Adrenal gland (tissue), 19 donors: ENCODE measurements at regions of chr15 and their contacts with region 1.

Region 1: DNA sequence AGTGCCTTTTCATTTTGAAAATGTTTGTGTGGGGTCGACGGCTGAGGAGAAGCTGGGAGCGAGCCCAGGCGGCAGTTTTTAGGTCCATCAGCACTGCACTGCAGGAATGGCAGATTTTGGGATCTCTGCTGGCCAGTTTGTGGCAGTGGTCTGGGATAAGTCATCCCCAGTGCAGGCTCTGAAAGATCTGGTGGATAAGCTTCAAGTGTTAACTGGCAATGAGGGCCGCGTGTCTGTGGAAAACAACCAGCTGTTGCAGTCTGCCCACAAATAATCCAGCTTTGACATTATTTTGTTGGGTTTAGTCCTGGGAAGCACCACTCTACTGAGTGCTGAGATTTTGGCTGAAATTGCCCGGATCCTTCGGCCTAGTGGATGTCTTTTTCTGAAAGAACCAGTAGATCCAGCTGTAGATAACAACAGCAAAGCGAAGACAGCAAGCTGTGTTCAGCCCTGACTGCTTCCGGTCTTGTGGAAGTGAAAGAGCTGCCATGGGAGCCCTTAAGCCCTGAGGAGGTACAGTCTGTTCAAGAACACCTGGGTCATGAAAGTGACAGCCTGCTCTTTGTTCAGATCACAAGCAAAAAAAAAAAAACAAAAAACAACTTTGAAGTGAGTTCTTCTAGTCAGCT is 13.1 kb upstream of the ANP32A start:
- DNase-seq: no peak
- H3K4me3 ChIP-seq: no peak overlapping the region
- H3K27ac ChIP-seq: no peak overlapping the region
- H3K4me1 ChIP-seq: no peaks in the 10 kb centered on the region
- H3K27me3 ChIP-seq: peaks cover 10% of the 10 kb centered on the region
- CTCF ChIP-seq: no peak
- POLR2A ChIP-seq: no peak

Region 2: DNA sequence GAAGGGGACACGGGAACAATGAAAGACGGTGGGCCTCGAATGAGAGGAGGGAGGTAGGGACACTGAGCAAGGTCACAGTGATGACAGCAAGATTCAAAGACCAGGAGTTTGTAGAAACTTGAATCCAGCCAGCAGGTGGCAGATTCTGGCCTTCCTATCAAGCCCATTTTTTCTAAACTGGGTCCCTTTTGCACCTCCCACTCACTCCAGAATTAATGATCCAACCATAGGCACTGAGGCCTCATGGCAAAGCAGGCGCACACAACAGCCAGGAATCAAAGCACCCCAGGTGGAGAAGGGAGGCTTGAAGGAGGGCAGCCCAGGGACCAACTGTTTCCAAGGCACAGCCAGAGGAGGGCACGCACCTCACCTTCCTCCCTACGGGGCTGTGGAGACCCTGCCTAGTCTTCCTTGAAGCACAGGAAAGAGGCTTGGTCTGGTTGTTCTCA is 103.3 kb before region 1 on chr15:
- intact Hi-C with region 1: loop called in 1 of 2 experiments (anchors 10 kb)
- DNase-seq: peak in 6 of 7 donors; percentile 37 to 74 (median 52)
- H3K4me3 ChIP-seq: no peak overlapping the region
- H3K27ac ChIP-seq: no peak overlapping the region
- H3K4me1 ChIP-seq: peaks cover 5 to 7% of the 10 kb centered on the region in 2 donors
- H3K27me3 ChIP-seq: no peaks in the 10 kb centered on the region
- CTCF ChIP-seq: peak; percentile 42 to 77 (median 61)
- POLR2A ChIP-seq: no peak

Region 3: DNA sequence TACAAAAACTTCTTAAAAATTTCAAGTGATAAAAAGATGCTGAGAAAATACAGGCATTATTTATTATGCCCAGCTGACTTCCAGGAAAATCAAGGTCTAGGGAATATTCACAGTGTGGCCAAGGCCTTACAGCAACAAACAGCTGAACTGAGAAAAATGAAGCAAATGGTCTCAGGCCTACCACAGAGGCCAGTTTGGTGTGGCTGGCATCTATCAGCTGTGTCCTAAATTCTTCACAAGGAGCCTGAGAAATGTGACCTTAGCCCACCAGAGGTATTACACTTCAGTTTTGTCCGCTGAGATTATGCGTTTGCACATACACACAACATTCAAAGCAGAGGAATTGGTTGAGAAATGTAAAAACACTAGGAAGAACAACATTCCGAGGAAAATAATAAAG is 90.6 kb before region 1 on chr15:
- intact Hi-C with region 1: no loop called
- DNase-seq: no peak
- H3K4me3 ChIP-seq: no peak overlapping the region
- H3K27ac ChIP-seq: no peak overlapping the region
- H3K4me1 ChIP-seq: no peaks in the 10 kb centered on the region
- H3K27me3 ChIP-seq: no peaks in the 10 kb centered on the region
- CTCF ChIP-seq: no peak
- POLR2A ChIP-seq: no peak

Region 4: DNA sequence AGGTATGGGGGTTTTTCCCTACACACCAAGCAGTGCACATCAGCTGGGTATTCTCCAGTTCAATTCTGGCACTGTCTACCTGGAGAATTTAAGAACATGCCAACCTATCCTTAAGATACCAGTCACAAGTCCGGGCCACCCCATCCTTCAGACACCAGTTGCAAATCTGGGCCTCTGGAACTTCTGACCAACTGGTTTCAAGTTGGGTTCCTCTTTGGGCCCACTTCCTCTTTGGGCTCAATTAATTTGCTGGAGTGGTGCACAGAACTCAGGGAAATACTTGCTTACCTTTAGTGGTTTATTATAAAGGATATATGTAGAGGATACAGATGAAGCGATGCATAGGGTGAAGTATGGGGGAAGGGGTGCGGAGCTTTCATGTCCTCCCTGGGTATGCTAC is 351.9 kb after region 1 on chr15:
- intact Hi-C with region 1: no loop called
- DNase-seq: no peak
- H3K4me3 ChIP-seq: no peak overlapping the region
- H3K27ac ChIP-seq: no peak overlapping the region
- H3K4me1 ChIP-seq: no peaks in the 10 kb centered on the region
- H3K27me3 ChIP-seq: no peaks in the 10 kb centered on the region
- CTCF ChIP-seq: no peak
- POLR2A ChIP-seq: no peak